ENCODE measurements at regions of chrX and their contacts with region 1.

Region 1: DNA sequence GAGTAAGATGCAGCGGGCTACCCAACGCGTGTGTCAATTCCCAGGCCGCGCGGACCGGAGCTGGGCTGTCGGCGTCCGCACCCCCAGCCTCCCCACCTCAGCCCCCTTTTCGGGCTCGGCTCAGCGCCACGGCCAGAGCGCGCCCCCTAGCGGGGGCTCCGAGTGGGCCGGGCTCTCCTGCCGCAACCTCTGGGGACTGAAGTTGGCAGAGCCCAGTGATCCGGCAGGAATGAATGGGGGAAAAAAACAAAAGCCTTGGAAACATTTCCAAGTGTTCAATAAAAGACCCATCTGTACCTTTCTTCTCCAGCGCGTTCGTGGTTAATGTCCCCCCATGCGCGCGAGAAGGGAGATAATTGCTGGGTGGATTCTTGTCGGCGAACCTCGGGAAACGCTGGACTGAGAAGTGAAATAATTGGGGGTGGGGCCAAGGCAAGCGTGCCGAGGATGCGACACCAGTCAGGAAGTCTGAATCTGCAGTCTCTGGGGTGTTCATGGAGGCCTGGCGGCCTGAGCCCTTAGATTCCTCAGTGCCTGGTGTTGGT is 5.2 kb upstream of the ARX start:
- DNase-seq: peak; percentile 43 to 78 (median 76)
- ATAC-seq: peak; percentile 93
- H3K4me3 ChIP-seq: no peak overlapping the region
- H3K27ac ChIP-seq: no peak overlapping the region
- H3K4me1 ChIP-seq: peaks cover 0 to 24% of the 10 kb centered on the region in 2 experiments; a peak in 3 of 5 replicates
- H3K27me3 ChIP-seq: peaks cover 26 to 51% of the 10 kb centered on the region in 2 experiments
- CTCF ChIP-seq: peak; percentile 61 to 77 (median 77)
- EP300 ChIP-seq: no peak
- POLR2A ChIP-seq: no peak
- RAD21 ChIP-seq: peak; percentile 41 to 64

Region 2: DNA sequence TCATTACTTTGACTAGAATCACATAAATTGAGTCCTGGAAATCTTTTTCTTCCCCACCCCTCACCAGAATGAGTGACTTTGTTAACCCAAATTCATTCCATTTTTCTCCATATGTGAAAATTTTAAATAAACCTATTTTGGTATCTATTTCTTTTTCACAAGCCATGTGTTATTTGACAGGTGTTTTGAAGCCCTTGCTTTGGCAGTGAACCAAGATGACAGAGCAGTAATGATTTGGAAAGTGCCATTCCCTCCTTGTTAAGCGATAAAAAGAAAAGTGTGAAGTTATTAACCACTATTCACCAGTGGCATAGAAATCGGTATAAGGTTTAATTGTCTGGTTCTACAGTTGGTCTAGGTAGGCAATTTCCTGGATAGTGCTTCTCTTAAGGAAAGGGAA is 261.2 kb before region 1 on chrX:
- CTCF ChIA-PET with region 1: no interaction called
- POLR2A ChIA-PET with region 1: no interaction called
- in situ Hi-C with region 1: no loop called
- intact Hi-C with region 1: loop called (anchors 5 kb)
- DNase-seq: no peak
- ATAC-seq: no peak
- H3K4me3 ChIP-seq: no peak overlapping the region
- H3K27ac ChIP-seq: no peak overlapping the region
- H3K4me1 ChIP-seq: no peaks in the 10 kb centered on the region
- H3K27me3 ChIP-seq: no peaks in the 10 kb centered on the region
- CTCF ChIP-seq: no peak
- EP300 ChIP-seq: no peak
- POLR2A ChIP-seq: no peak
- RAD21 ChIP-seq: no peak

Region 3: DNA sequence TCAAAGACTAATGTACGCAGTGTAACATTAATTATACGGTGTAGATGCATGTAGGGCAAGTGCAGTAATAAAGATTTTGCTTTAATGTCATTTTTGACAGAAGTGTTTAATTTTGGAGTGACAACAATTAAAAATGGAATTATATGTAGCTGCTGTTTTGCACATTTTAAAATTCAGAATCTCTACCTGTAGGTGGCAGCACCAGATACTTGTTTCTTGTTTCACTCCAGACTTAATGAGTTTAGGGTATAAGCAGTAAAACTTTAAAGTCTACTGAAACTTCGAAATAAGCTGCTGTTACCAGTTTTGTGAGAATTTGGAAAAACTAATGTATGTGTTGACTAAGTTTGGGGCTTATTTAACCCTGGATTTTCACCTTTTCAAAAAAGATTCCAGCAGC is 182.3 kb before region 1 on chrX:
- CTCF ChIA-PET with region 1: interaction called, 4 read pairs
- POLR2A ChIA-PET with region 1: no interaction called
- in situ Hi-C with region 1: no loop called
- intact Hi-C with region 1: loop called (anchors 1 kb)
- DNase-seq: peak in 2 of 4 experiments; percentile 7 to 43
- ATAC-seq: peak; percentile 59; the same call in 2 of the 3 replicates
- H3K4me3 ChIP-seq: no peak overlapping the region
- H3K27ac ChIP-seq: no peak overlapping the region
- H3K4me1 ChIP-seq: no peaks in the 10 kb centered on the region
- H3K27me3 ChIP-seq: no peaks in the 10 kb centered on the region
- CTCF ChIP-seq: peak in 2 of 3 experiments; percentile 18 to 58; a peak in 3 of 6 replicates
- EP300 ChIP-seq: no peak
- POLR2A ChIP-seq: no peak
- RAD21 ChIP-seq: peak in 1 of 2 experiments; percentile 50; a peak in 3 of 4 replicates

Region 4: GRCh38 chrX:25034889-25035288 is 13.9 kb after region 1 on chrX:
- CTCF ChIA-PET with region 1: no interaction called
- POLR2A ChIA-PET with region 1: no interaction called
- in situ Hi-C with region 1: no loop called
- intact Hi-C with region 1: no loop called
- DNase-seq: peak in 1 of 4 experiments; percentile 29
- ATAC-seq: peak; percentile 75
- H3K4me3 ChIP-seq: no peak overlapping the region
- H3K27ac ChIP-seq: no peak overlapping the region
- H3K4me1 ChIP-seq: no peaks in the 10 kb centered on the region; a peak in 1 of 5 replicates
- H3K27me3 ChIP-seq: peaks cover 2 to 3% of the 10 kb centered on the region in 2 experiments; a peak in 3 of 5 replicates
- CTCF ChIP-seq: peak; percentile 44 to 61 (median 51); a peak in 5 of 6 replicates
- EP300 ChIP-seq: no peak
- POLR2A ChIP-seq: no peak
- RAD21 ChIP-seq: peak; percentile 47 to 66; a peak in 3 of 4 replicates

Measured in K562 (cell line).